Gastrocnemius medialis (tissue), 4 donors: ENCODE measurements at regions of chr7 and their contacts with region 1.

Region 1: DNA sequence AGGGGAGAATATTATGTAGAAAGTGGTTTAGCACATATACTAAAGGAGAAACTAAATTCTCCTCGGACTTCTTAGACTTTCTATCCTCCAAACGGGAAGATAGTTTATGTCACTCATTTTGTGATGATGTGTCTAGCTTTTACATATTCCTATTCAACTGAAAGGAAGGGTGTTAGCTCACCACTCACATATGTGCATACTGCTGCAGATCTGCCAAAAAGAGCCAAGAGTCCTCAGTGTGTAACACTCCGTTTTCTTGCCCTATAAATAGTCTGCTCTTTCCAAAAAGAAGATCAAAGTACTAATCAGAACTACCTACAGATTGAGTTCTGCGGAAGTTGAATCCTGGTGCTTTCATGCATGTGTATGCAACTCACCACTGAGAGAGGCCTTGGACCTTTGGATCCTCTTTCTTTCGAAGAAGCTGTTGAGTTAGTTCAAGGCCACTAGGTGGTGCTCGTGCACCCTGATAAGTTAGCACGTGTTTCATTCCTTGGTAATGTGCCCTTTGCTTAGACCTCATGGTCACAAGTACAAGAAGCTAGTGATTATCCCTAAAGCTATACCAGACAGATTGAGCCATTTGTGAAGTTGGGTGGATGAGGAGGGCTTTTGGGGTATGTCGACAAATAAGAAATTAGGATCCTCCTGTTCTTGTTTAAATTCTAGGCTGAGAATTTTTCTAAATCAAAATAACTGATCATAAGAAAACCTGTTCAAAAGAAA is 14.1 kb downstream of the YAE1 start:
- DNase-seq: peak; percentile 59 to 71
- ATAC-seq: peak; percentile 93 to 99
- H3K4me3 ChIP-seq: no peak overlapping the region
- H3K27ac ChIP-seq: no peak overlapping the region
- H3K4me1 ChIP-seq: no peaks in the 10 kb centered on the region
- H3K27me3 ChIP-seq: no peaks in the 10 kb centered on the region
- CTCF ChIP-seq: peak; percentile 65 to 89 (median 83)
- POLR2A ChIP-seq: no peak

Region 2: DNA sequence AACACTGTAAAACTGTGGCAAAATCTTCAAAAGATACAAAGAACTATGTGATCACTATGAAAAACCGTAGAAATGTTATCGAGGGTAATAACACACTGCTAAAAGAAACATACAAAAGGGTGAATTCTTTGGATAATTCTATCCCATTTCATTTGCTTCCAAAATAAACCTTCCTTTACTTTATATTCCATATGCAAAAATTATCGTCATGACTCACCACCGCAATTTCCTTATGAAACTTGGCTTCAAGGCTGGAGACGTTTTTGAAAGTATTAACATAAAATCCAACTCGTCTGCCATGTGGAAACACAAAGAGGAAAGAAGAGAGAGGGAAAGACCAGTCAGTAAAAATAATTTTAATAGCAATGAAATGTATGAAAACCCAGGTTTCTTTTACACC is 1114.4 kb before region 1 on chr7:
- in situ Hi-C with region 1: no loop called
- intact Hi-C with region 1: no loop called
- DNase-seq: no peak
- ATAC-seq: no peak
- H3K4me3 ChIP-seq: no peak overlapping the region
- H3K27ac ChIP-seq: no peak overlapping the region
- H3K4me1 ChIP-seq: no peaks in the 10 kb centered on the region
- H3K27me3 ChIP-seq: no peaks in the 10 kb centered on the region
- CTCF ChIP-seq: no peak
- POLR2A ChIP-seq: no peak

Region 3: DNA sequence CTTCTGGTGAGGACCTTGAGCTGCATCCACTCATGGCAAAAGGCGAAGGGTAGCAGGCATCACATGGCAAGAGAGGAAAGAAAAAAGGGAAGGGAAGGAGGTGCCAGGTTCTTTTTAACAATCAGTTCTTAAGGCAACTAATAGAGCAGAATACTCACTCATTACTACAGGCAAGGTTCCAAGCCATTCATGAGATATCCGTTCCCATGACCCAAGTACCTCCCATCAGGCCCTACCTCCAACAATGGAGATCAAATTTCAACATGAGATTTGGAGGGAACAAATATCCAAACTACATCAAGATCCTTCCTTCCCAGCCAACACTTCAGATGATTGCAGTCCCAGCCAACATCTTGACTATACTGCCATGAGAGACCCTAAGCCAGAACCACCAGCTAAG is 53.0 kb before region 1 on chr7:
- in situ Hi-C with region 1: no loop called
- intact Hi-C with region 1: no loop called
- DNase-seq: no peak
- ATAC-seq: no peak
- H3K4me3 ChIP-seq: no peak overlapping the region
- H3K27ac ChIP-seq: no peak overlapping the region
- H3K4me1 ChIP-seq: no peaks in the 10 kb centered on the region
- H3K27me3 ChIP-seq: no peaks in the 10 kb centered on the region
- CTCF ChIP-seq: no peak
- POLR2A ChIP-seq: no peak

Region 4: DNA sequence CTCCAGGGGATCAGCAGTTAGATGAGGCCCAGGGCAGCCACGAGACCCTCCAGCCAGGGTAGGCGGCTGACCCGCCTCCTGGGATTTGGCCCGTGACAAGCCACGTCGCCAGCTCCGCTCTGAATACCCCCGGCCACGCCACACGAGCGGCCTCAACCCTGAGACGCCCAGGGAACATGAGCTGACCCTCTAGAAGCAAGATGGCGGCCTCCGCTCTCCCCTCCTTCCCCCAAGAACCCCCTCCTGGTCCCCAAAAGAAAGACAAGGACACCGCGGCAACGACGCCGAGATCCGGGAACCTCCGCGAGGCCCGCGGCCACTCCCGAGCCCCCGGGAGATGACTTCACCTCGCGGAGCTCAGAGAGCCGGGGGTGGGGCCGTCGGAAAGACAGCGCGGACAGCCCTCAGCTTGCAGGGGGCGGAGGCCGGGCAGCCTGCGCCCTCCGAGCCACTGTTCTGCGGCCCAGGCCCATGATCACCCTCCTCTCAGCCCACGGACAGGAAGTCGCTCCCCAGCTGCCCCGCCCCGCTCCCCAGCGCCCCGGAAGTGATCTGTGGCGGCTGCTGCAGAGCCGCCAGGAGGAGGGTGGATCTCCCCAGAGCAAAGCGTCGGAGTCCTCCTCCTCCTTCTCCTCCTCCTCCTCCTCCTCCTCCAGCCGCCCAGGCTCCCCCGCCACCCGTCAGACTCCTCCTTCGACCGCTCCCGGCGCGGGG is 42.9 kb after region 1 on chr7 and contains the start of gene RALA:
- in situ Hi-C with region 1: no loop called
- intact Hi-C with region 1: loop called (anchors 2 kb)
- DNase-seq: peak; percentile 89
- ATAC-seq: peak; percentile 94
- H3K4me3 ChIP-seq: peak within 1 kb of the TSS; percentile 78 to 98 (median 87)
- H3K27ac ChIP-seq: peak within 1 kb of the TSS; percentile 89 to 95 (median 92)
- H3K4me1 ChIP-seq: peaks cover 45 to 48% of the 10 kb centered on the region in 2 donors
- H3K27me3 ChIP-seq: no peaks in the 10 kb centered on the region
- CTCF ChIP-seq: no peak
- POLR2A ChIP-seq: peak; percentile 74 to 83
- total RNA-seq, gene RALA: 9.2 to 11.6 (median 10.7) TPM

Region 5: DNA sequence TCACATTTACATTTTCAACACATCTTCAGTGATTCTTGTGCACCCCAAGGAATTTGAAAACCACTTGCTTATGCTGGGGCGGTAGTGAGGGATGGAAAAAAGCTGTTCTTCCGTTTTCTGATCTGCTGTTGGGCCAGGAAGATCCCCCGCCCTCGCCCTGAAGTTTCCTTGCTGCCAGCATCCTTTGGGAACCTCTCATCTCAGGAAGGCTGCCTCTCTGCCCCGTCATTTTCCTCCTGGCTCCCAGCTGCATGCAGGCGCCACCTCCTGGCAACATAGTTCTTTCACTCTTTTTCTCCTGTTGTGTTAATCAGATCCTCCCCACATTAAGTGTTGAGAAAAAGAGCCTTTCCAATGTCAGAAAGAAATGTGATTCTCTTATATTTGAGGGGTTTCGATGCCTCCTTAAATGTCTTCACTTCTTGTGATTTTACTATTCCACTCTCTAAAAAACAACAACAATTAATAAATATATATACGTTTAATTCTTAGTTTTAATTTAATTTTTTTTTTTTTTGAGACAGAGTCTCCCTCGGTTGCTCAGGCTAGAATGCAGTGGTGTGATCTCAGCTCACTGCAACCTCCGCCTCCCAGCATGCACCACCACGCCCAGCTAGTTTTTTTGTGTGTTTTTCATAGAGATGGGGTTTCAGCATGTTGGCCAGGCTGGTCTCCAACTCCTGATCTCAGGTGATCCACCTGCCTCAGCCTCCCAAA is 165.9 kb after region 1 on chr7:
- in situ Hi-C with region 1: loop called (anchors 5 kb)
- intact Hi-C with region 1: loop called (anchors 1 kb)
- DNase-seq: peak; percentile 46 to 63
- ATAC-seq: peak; percentile 74 to 93
- H3K4me3 ChIP-seq: no peak overlapping the region
- H3K27ac ChIP-seq: no peak overlapping the region
- H3K4me1 ChIP-seq: no peaks in the 10 kb centered on the region
- H3K27me3 ChIP-seq: no peaks in the 10 kb centered on the region
- CTCF ChIP-seq: peak; percentile 58 to 80 (median 67)
- POLR2A ChIP-seq: no peak

Region 6: DNA sequence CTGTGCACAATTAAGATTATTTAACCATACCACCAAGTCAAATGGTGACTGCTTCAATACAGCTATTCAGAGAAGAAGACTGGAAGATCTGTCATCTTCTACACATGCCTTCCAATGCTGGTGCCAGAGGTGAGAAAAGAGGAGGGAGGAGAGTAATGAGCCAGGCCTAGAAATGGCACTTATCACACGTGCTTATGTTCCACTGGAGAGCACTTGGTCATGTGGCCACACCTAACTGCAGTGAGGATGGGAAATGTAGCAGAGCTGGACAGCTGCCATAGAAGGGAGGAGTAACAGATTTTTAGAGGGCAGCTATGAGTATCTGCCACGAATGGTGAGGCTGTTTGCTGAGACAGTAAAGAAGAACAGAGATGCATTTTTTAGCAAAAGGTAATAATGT is 477.0 kb after region 1 on chr7:
- in situ Hi-C with region 1: no loop called
- intact Hi-C with region 1: loop called (anchors 10 kb)
- DNase-seq: no peak
- ATAC-seq: peak in 1 of 2 donors; percentile 47
- H3K4me3 ChIP-seq: no peak overlapping the region
- H3K27ac ChIP-seq: no peak overlapping the region
- H3K4me1 ChIP-seq: peaks cover 10 to 12% of the 10 kb centered on the region in 2 donors
- H3K27me3 ChIP-seq: no peaks in the 10 kb centered on the region
- CTCF ChIP-seq: no peak
- POLR2A ChIP-seq: no peak